ENCODE measurements at regions of chr1 and their contacts with region 1.

Region 1: DNA sequence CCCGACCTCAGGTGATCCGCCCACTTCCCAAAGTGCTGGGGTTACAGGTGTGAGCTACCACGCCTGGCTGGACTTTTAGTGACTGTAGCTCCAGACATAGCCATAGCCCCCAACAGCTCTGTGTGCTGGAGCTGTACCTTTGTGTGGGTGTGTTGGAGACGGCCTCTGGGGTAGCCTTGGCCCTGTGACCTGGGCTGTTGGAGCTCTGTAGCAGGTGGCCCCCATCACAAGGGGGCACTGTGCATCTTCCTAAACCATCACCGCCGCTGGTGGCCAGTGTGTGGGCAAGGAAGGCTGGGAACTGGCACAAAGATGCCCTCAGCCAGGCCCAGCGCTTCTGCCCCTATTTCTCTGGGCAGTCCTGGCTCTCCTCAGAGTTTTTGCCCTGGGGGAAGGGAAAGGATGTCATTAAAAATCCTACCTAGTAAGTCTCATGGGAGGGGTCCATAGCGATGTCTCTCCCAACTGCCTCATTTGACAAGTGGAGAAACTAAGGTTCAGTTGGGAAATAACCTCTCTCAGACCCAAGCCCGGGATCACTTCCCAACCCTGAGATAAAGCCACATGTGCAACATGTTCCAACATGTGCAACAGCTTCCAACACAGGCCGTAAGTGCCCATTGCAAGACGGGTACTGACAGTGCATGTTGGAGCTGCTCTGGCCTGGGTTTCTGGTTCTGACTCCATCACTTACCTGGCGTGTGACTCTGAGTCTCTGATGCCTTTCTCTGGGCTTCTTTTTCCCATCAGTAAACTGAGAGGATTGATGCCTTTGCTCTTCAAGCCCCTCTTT is 38.2 kb upstream of the FOXO6 start:
- ATAC-seq: peak in 4 of 8 experiments; percentile 30 to 96 (median 72)
- H3K4me3 ChIP-seq: no peak overlapping the region
- H3K27ac ChIP-seq: no peak overlapping the region
- H3K4me1 ChIP-seq: peaks cover 24% of the 10 kb centered on the region in 2 donors

Region 2: GRCh38 chr1:41416552-41417334 is 93.7 kb after region 1 on chr1:
- in situ Hi-C with region 1: loop called in 1 of 9 experiments (anchors 25 kb)
- ATAC-seq: peak in 7 of 8 experiments; percentile 9 to 85 (median 45)
- H3K4me3 ChIP-seq: no peak overlapping the region
- H3K27ac ChIP-seq: no peak overlapping the region
- H3K4me1 ChIP-seq: peaks cover 37 to 42% of the 10 kb centered on the region in 2 donors

Measured in motor neuron (in vitro differentiated cells).